MCF 10A (cell line): ENCODE measurements at regions of chr2 and their contacts with region 1.

Region 1: DNA sequence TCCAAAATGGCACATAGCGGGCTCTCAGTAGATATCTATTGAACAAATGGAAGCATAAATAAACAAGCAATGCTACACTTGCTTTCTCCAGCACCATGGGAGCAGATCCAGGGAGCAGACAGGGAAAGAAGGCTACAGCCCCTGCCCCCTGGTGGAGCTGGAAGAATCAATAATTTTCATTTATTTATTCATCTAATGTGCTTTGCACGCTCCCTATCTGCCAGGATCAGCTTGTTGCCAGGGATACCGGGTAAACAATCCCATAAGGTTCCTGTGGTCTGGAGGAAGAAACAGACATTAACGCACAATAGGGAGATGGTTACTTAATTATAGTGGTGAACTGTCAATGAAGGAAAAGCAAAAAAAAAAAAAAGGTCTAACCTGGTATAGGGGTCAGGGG is 40.1 kb upstream of the CLASP1 start:
- DNase-seq: peak; percentile 49
- H3K4me3 Mint-ChIP-seq: no peak overlapping the region
- H3K27ac Mint-ChIP-seq: no peak overlapping the region
- H3K4me1 Mint-ChIP-seq: peaks cover 1% of the 10 kb centered on the region
- H3K27me3 Mint-ChIP-seq: no peaks in the 10 kb centered on the region
- CTCF ChIP-seq: no peak

Region 2: DNA sequence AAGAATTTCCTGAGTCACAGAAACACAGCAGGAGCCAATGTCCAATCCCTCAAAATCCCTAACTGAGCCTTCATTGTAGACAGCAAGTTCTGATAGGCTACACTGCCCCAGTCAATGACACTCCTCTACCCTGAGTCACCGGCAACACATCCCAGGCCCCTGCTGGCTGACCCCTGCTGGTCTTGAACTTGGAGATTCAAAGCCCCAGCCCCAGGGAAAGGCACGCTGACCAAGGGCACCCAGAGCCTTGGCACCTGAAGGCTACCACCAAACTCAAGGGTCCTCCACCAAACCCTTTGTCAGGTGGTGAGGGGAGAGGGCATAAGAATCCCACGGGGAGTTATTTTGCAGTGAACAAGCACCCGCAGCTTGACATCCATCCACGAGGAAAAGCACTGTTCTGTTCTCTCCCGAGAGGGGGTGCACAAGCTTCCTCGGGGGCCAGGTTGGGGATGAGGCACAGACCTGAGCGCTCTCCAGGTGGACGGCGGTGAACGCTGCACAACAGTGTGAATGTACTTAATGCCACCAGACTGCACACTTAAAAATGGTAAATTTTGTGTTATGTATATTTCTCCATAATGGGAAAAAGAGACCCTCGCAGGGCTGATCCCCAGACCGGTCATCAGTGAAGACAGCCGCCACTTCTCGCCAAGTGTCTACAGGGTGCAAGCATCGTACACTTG is 451.2 kb before region 1 on chr2:
- CTCF ChIA-PET with region 1: no interaction called
- POLR2A ChIA-PET with region 1: no interaction called
- intact Hi-C with region 1: no loop called
- DNase-seq: no peak
- H3K4me3 Mint-ChIP-seq: no peak overlapping the region
- H3K27ac Mint-ChIP-seq: no peak overlapping the region
- H3K4me1 Mint-ChIP-seq: no peaks in the 10 kb centered on the region
- H3K27me3 Mint-ChIP-seq: no peaks in the 10 kb centered on the region
- CTCF ChIP-seq: no peak

Region 3: GRCh38 chr2:121596221-121597080 is 92.9 kb before region 1 on chr2:
- CTCF ChIA-PET with region 1: interaction called, 4 read pairs
- POLR2A ChIA-PET with region 1: no interaction called
- intact Hi-C with region 1: loop called (anchors 1 kb)
- DNase-seq: peak; percentile 65
- H3K4me3 Mint-ChIP-seq: no peak overlapping the region
- H3K27ac Mint-ChIP-seq: peak overlapping the region; percentile 55
- H3K4me1 Mint-ChIP-seq: peaks cover 23% of the 10 kb centered on the region
- H3K27me3 Mint-ChIP-seq: no peaks in the 10 kb centered on the region
- CTCF ChIP-seq: peak; percentile 36

Region 4: GRCh38 chr2:121860033-121860757 is 170.8 kb after region 1 on chr2:
- CTCF ChIA-PET with region 1: no interaction called
- POLR2A ChIA-PET with region 1: no interaction called
- intact Hi-C with region 1: no loop called
- DNase-seq: peak; percentile 35
- H3K4me3 Mint-ChIP-seq: no peak overlapping the region
- H3K27ac Mint-ChIP-seq: no peak overlapping the region
- H3K4me1 Mint-ChIP-seq: peaks cover 11% of the 10 kb centered on the region
- H3K27me3 Mint-ChIP-seq: peaks cover 30% of the 10 kb centered on the region
- CTCF ChIP-seq: no peak